ENCODE measurements at regions of chr21 and their contacts with region 1.

Region 1: DNA sequence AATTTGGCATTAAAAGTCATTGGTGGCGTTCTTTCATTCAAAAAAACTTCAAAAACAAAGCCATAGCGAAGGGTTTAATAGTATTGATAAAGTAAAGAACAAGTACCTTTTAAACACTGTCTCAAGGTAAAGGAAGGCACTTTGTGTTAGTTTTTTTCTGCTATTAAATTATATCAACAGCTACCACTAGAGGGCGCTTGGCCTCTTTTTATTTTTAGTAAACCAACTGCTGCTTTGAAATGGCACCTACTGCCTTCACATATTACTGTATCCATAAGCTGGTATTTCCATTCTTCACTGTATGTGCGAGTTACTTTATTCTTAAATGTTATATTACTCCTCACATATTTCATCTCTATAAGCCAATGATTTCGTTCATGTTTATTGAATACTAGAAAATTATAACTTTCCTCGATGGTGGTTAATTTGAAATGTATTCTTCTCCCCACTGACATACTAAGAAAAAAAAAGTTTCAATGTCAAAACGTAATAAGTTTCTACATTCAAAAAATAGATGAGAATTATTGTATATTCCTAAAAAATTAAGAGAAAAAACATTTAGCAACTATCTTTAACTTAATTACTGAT is 125.7 kb upstream of the CXADR start:
- DNase-seq: no peak
- H3K4me3 ChIP-seq: no peak overlapping the region
- H3K27me3 ChIP-seq: 0 out of 2 replicates have a peak, but pooled peaks cover 1% of the 10 kb centered on the region
- CTCF ChIP-seq: peak; percentile 56

Region 2: GRCh38 chr21:17554679-17555465 is 167.7 kb after region 1 on chr21:
- CTCF ChIA-PET with region 1: interaction called, 37 read pairs
- POLR2A ChIA-PET with region 1: no interaction called
- DNase-seq: no peak
- H3K4me3 ChIP-seq: no peak overlapping the region
- H3K27me3 ChIP-seq: 0 out of 2 replicates have a peak, but pooled peaks cover 2% of the 10 kb centered on the region
- CTCF ChIP-seq: peak; percentile 34; the same call in 1 of the 2 replicates

Region 3: GRCh38 chr21:17580319-17580718 is 193.2 kb after region 1 on chr21:
- CTCF ChIA-PET with region 1: interaction called, 67 read pairs
- POLR2A ChIA-PET with region 1: no interaction called
- DNase-seq: no peak
- H3K4me3 ChIP-seq: no peak overlapping the region
- H3K27me3 ChIP-seq: no peaks in the 10 kb centered on the region
- CTCF ChIP-seq: no peak

Region 4: DNA sequence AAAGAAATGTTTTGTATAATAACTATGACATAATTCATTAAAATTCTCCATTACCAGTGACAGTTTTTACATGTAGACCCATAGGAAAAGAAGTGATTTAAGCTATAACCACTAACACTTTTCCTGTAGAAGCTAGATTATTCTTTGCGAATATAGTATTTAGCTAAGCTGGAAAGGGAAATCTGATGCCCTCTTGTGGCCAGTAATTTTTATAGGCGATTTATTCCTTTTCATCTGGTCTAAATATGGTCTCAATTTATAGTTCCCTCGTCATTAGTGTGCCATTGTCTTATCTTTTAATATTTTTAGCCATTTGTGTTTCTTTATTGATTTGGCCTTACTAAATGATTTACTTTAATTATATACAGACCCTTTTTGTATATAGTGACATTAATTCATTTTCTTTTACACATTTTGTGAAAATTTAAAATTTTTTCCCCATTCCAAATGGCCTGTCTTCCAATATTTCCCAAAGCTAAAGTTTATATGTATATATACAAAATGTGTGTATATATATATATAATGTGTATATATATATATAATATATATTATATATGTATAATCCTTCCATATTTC is 198.8 kb after region 1 on chr21:
- CTCF ChIA-PET with region 1: interaction called, 67 read pairs
- POLR2A ChIA-PET with region 1: no interaction called
- DNase-seq: no peak
- H3K4me3 ChIP-seq: no peak overlapping the region
- H3K27me3 ChIP-seq: no peaks in the 10 kb centered on the region
- CTCF ChIP-seq: peak; percentile 58

Region 5: DNA sequence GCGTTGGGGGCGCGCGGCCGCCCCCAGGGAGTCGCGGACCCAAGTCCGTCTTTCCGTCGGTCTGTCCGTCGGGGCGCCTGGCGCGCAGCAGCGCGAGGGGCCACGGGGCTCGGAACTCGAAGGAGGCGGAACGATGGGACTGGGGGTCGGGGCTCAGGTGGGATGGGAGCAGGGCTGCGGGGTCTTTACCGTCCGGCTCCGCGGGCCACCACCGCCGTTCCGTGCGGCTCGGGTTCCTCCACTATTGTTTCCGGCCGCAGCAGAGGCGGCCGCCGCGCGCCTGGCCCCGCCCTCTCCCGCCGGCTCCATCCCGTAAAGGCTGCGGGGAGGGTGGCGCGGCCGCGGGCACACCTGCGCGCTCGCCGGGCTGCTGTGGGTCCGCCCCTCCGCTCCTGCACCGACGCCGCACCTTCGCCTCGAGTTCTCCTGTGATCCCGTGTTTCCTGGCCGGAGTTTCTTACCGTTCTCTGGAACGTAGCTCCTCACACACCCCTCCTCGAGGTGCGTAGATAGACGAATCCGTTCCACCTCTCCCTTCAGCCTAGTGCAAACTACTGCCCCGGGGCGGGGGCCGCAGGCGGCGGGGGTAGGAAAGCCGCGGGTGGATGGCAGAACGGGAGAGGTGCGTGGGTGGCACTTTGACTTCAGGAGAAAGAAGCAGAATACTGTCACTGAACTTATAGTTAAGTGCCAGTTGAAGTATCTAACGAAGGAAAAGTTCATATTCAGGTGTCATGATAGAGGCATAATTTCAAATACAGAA is 432.2 kb after region 1 on chr21 and contains the start of gene C21orf91:
- CTCF ChIA-PET with region 1: no interaction called
- POLR2A ChIA-PET with region 1: no interaction called
- DNase-seq: peak; percentile 27
- H3K4me3 ChIP-seq: peak within 1 kb of the TSS; percentile 82
- H3K27me3 ChIP-seq: no peaks in the 10 kb centered on the region
- CTCF ChIP-seq: no peak
- polyA plus RNA-seq, gene C21orf91: 3.4 and 8.6 TPM in 2 replicates